ENCODE measurements at regions of chr3 and their contacts with region 1.

Region 1: GRCh38 chr3:9792405-9793160 is at the starts of genes ARPC4 and TADA3:
- DNase-seq: peak; percentile 94 to 96
- ATAC-seq: peak; percentile 94 to 95
- H3K4me3 ChIP-seq: peak within 1 kb of the TSS; percentile 68
- H3K27ac ChIP-seq: peak within 1 kb of the TSS; percentile 95 to 97
- H3K4me1 ChIP-seq: peaks cover 21% of the 10 kb centered on the region
- CTCF ChIP-seq: no peak
- EP300 ChIP-seq: peak in 1 of 2 experiments; percentile 25; a peak in 1 of 5 replicates
- POLR2A ChIP-seq: peak; percentile 44
- RAD21 ChIP-seq: no peak
- polyA plus RNA-seq, gene ARPC4: 126 and 140 TPM in 2 replicates
- polyA plus RNA-seq, gene TADA3: 42.6 and 49.2 TPM in 2 replicates

Region 2: DNA sequence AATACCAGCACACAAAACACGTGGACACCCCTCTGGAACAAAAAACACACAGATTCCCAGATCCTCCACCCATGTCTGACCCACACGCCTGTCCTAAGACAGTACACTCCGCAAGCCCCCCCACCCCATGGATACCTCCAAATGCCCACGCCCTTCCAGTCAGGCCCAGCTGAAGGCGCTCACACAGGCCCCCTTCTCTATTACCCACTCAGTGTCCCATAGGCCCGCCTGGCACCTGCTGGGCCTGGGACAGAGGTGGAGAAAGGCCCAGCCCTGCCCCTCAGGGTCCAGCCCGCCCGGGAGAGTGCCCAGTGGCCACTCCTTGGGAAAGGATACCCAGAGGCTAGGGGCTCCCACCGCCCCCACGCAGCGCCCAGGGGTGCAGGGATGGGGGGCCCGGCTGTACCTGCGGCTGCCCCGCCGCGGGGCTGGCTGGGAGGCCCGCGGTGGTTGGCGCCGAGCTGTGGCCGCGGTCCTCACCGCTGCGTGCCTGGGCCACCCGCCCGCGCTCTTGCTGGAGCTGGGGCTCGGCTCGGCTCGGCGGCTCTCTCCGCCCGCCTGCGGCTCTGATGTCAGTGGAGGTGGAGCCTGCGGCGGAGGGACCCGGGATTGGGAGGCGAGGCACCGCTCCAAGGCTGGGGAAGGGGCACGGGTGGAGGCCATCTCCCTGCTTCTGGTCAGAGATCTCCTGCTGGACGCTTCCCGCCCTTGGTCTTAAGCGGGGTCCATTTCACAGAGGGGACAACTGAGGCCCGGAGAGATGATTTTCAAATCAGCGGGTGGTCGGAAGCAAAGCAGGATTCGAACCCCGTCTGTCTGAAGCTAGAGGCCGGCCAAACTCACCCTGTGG is 22.9 kb before region 1 on chr3 and contains the start of gene CAMK1:
- CTCF ChIA-PET with region 1: interaction called, 3 read pairs
- POLR2A ChIA-PET with region 1: interaction called, 10 read pairs
- DNase-seq: peak; percentile 44 to 79
- ATAC-seq: peak; percentile 91 to 93
- H3K4me3 ChIP-seq: peak within 1 kb of the TSS; percentile 74
- H3K27ac ChIP-seq: peak within 1 kb of the TSS; percentile 92 to 95
- H3K4me1 ChIP-seq: peaks cover 27% of the 10 kb centered on the region
- CTCF ChIP-seq: no peak
- EP300 ChIP-seq: no peak
- POLR2A ChIP-seq: peak; percentile 69
- RAD21 ChIP-seq: no peak
- polyA plus RNA-seq, gene CAMK1: 13.5 and 16.0 TPM in 2 replicates

Region 3: DNA sequence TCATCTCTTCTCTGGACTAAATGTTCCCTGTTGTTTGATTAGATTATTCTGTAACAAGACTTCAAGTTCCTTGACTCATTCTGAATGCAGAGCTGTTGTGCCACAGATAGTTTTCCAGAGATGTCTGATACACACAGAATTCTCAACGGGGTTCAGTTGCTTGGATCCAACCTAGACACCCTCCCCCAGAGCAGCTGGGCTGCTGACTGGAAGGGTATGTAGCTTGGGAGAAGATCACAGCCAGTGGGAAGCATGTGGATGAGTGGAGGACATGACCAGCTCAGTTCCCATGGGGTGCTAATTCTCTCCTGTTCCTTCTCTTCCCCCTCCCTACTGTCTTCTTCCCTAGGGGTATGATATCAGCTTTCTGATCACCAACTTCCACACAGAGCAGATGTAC is 10.9 kb after region 1 on chr3:
- CTCF ChIA-PET with region 1: interaction called, 5 read pairs
- POLR2A ChIA-PET with region 1: interaction called, 17 read pairs
- DNase-seq: no peak
- ATAC-seq: no peak
- H3K4me3 ChIP-seq: no peak overlapping the region
- H3K27ac ChIP-seq: no peak overlapping the region
- H3K4me1 ChIP-seq: peaks cover 7% of the 10 kb centered on the region; the same call in 2 of the 3 replicates
- CTCF ChIP-seq: no peak
- EP300 ChIP-seq: no peak
- POLR2A ChIP-seq: no peak
- RAD21 ChIP-seq: no peak

Region 4: DNA sequence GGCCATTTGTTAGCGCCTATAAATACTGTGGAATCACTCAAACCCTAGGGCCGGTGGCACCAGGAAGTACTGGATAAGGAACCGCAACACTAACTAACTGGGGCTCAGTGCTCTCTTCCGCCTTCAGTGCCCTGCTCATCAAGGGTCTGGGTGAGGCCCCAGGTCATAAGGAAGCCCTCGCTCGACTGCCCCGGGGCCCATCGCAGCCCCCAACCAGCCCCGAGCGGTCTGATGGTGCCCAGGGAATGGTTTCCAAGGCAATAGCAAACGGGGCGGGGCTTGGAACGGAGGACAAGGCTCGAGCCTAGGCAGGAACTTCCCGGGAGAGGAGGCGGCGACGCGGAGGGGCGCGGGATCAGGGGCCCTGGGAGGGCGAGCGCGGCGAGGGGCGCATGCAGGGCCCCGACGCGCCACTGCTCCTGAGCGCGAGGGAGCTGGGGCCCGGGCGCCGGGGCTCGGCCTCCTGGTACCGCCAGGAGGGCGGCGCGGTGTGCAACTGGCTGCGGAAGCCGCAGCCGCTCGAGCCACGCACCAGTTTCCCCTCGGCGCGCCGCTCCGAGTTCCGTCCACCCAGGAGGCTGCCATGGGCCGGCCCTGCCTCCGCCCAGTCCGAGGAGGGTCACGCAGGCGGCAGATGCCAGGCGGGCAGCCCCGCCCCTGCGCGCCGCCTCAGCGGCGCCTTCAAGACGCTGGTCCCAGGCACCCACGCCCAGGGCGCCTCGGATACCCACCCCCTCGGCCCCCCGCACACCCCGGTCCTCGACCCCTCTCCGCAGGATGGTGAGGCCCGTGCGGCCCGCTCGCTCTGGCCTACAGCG is 17.2 kb after region 1 on chr3 and contains the start of gene TTLL3:
- CTCF ChIA-PET with region 1: interaction called, 5 read pairs
- POLR2A ChIA-PET with region 1: interaction called, 17 read pairs
- DNase-seq: peak; percentile 60 to 73
- ATAC-seq: peak; percentile 70 to 82
- H3K4me3 ChIP-seq: peak within 1 kb of the TSS; percentile 75
- H3K27ac ChIP-seq: peak within 1 kb of the TSS; percentile 95 to 96
- H3K4me1 ChIP-seq: peaks cover 25% of the 10 kb centered on the region
- CTCF ChIP-seq: no peak
- EP300 ChIP-seq: no peak
- POLR2A ChIP-seq: peak; percentile 48
- RAD21 ChIP-seq: no peak
- polyA plus RNA-seq, gene TTLL3: 13.0 and 18.1 TPM in 2 replicates

Measured in A549 (cell line).